ENCODE measurements at regions of chr9 and their contacts with region 1.

Region 1: GRCh38 chr9:132312873-132313272 is 41.9 kb downstream of the SETX start:
- DNase-seq: no peak
- ATAC-seq: no peak

Region 2: GRCh38 chr9:132241840-132242620 is 70.8 kb before region 1 on chr9:
- intact Hi-C with region 1: no loop called
- DNase-seq: no peak
- ATAC-seq: no peak

Region 3: GRCh38 chr9:132327537-132327936 is 14.7 kb after region 1 on chr9:
- intact Hi-C with region 1: loop called (anchors 2 kb)
- DNase-seq: no peak
- ATAC-seq: no peak